GM10248 (cell line): ENCODE measurements at regions of chr4 and their contacts with region 1.

Region 1: GRCh38 chr4:105369988-105370387 is 103.9 kb downstream of the PPA2 start:
- DNase-seq: no peak
- CTCF ChIP-seq: no peak

Region 2: GRCh38 chr4:105386012-105386411 is 16.0 kb after region 1 on chr4:
- CTCF ChIA-PET with region 1: interaction called, 11 read pairs
- POLR2A ChIA-PET with region 1: no interaction called
- DNase-seq: no peak
- CTCF ChIP-seq: no peak

Region 3: GRCh38 chr4:105417624-105418023 is 47.6 kb after region 1 on chr4:
- CTCF ChIA-PET with region 1: no interaction called
- POLR2A ChIA-PET with region 1: no interaction called
- DNase-seq: no peak
- CTCF ChIP-seq: no peak